HCT116 (cell line): ENCODE measurements at regions of chr10 and their contacts with region 1.

Region 1: DNA sequence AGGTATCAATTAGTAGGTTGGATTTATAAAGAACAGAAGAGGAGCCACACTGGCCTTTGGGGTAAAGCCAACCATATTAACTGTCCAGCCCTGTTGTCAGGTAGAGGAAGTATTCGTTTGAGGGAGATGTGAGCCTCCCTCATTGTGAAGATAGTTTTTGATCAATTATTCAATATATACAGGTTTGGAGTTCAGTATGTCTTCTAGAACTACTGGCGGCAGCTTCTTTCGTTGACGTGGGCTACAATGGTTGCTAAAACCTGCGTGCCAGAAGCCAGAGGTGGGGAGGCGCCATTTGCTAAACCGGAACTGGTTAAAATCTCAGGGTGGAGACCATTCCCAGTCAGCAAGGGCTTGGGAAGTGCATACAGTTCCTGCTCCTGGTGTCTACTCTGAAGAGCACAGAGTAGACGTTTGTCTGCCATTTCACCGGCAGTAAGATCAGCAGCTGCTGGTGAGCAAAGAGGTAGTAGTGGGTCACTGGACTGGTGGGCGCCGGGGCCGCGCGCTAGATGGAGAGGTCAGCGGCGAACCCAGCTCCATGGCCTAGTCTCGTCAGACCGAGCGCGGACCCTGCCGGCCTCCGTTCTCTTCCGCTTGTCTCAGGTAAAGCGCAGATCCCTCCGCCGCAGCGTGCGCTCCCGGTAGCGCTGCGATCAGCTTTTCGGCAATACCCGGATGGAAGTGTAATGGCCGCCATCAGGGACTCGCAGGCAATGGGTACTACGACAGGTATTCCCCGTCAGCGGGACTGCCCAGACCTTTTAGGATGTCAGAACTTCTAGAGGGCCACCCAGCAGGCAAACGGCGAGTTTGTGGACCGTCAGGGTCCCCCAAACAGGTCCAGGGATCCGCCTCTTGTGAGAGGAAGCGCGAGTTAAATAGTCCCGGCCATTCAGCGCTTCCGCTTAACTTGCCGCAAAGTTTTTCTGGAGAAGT is at the start of gene ZNF518A:
- DNase-seq: peak; percentile 99
- ATAC-seq: peak; percentile 86
- H3K4me3 ChIP-seq: peak within 1 kb of the TSS; percentile 59 to 71
- H3K27ac ChIP-seq: peak within 1 kb of the TSS; percentile 94
- H3K4me1 ChIP-seq: peaks cover 20 to 33% of the 10 kb centered on the region in 2 experiments; a peak in 3 of 4 replicates
- H3K27me3 ChIP-seq: no peaks in the 10 kb centered on the region
- CTCF ChIP-seq: no peak
- POLR2A ChIP-seq: peak; percentile 93
- RAD21 ChIP-seq: no peak; the same call in 1 of the 2 replicates
- total RNA-seq, gene ZNF518A: 36.7 TPM

Region 2: DNA sequence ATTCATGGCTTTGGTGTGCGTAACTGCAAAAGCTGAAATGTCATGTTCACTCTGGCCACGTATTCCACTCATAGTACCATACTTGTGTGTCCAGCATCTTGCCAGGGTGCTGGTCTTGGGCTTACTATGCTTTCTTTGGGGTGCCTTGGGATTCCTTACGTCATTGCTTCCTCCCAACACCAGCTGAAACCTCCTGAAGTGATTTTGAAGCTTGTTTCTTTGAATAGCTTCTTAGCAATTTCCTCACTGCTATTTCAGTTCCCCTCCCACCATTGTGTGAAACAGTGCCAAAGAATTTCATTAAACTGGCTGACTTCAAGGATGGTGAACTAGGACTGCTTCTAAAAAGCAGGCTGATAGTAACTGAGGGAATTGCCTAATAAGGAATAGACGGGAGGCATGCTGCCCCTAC is 336.8 kb before region 1 on chr10:
- CTCF ChIA-PET with region 1: no interaction called
- POLR2A ChIA-PET with region 1: no interaction called
- RAD21 ChIA-PET with region 1: no interaction called
- intact Hi-C with region 1: no loop called
- DNase-seq: no peak
- ATAC-seq: no peak
- H3K4me3 ChIP-seq: no peak overlapping the region
- H3K27ac ChIP-seq: no peak overlapping the region
- H3K4me1 ChIP-seq: no peaks in the 10 kb centered on the region
- H3K27me3 ChIP-seq: no peaks in the 10 kb centered on the region
- CTCF ChIP-seq: no peak
- POLR2A ChIP-seq: no peak
- RAD21 ChIP-seq: no peak

Region 3: DNA sequence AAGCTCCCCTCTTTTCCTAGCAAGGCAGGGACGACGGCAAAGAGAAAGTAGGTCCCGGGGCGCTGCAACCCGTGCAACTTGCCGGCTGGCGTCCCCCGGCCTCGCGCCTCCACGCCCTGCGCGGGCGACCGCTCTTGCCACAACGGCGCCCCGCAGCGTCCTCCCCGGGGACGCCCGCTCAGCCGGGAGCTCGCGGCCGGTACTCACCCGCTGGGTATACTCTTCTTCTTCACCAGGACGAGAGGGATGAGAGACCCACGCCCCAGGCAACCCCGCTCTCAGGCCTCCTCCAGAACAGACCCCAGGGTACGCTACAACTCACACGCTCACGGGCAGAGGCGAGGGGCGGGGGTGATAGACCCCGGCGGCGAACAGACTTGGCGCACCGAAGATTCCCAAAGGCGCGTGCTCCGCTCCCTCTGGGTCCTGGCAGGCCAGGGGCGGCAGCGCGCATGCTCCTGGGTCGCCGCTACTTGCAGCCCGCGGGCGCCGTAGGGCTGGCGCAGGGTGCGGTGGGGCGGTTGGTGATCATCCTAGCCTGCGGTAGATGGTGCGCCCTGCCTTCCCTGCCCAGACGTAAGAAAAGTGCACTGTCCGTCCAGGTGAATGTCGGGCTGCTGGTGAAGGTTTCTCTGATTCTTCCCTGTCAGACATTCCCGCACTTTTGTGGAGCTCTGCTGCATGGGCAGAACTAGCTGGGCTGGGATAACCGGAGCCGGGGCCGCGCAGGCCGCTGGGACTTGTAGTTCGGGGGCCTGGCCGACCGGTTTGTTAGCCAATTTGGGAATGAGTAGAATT is 222.0 kb before region 1 on chr10 and contains the start of gene CC2D2B:
- CTCF ChIA-PET with region 1: no interaction called
- POLR2A ChIA-PET with region 1: no interaction called
- RAD21 ChIA-PET with region 1: no interaction called
- intact Hi-C with region 1: loop called (anchors 10 kb)
- DNase-seq: peak; percentile 61
- ATAC-seq: peak; percentile 95
- H3K4me3 ChIP-seq: peak within 1 kb of the TSS; percentile 63 to 66
- H3K27ac ChIP-seq: peak within 1 kb of the TSS; percentile 68
- H3K4me1 ChIP-seq: peaks cover 0 to 19% of the 10 kb centered on the region in 2 experiments; a peak in 1 of 4 replicates
- H3K27me3 ChIP-seq: no peaks in the 10 kb centered on the region
- CTCF ChIP-seq: no peak
- POLR2A ChIP-seq: peak; percentile 80
- RAD21 ChIP-seq: no peak
- total RNA-seq, gene CC2D2B: 0.20 TPM

Region 4: DNA sequence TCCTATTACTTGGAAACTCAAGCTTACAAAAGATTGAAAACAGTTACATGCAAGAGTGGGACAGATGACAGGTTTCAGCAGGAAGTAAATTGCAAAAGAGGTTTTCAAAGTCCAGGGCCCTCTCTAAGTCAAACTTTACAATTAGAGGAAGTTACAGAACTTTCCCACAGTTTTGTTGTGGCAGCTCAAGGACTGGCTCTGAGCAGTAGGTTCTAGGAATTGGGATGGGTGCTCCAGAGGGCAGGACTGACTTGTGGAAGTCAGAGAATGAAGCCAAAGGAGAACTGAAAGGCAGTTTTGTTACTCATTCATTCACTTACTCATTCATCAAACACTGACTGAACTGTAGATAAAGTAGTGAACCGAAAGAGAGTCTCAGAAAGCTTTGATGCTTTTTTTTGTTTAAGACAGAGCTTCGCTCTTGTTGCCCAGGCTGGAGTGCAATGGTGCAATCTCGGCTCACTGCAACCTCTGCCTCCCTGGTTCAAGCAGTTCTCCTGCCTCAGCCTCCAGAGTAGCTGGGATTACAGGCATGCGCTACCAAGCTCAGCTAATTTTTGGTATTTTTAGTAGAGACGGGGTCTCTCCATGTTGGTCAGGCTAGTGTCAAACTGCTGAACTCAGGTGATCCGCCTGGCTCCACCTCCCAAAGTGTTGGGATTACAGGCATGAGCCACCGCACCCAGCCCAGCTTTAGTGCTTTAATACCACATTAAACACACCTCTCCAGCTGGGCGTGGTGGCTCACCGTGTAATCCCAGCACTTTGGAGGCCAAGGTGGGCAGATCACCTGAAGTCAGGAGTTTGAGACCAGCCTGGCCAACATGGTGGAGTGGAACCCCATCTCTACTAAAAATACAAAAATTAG is 153.1 kb before region 1 on chr10:
- CTCF ChIA-PET with region 1: no interaction called
- POLR2A ChIA-PET with region 1: no interaction called
- RAD21 ChIA-PET with region 1: no interaction called
- intact Hi-C with region 1: no loop called
- DNase-seq: no peak
- ATAC-seq: no peak
- H3K4me3 ChIP-seq: no peak overlapping the region
- H3K27ac ChIP-seq: no peak overlapping the region
- H3K4me1 ChIP-seq: no peaks in the 10 kb centered on the region
- H3K27me3 ChIP-seq: no peaks in the 10 kb centered on the region; the same call in 1 of the 2 replicates
- CTCF ChIP-seq: no peak
- POLR2A ChIP-seq: no peak
- RAD21 ChIP-seq: no peak

Region 5: DNA sequence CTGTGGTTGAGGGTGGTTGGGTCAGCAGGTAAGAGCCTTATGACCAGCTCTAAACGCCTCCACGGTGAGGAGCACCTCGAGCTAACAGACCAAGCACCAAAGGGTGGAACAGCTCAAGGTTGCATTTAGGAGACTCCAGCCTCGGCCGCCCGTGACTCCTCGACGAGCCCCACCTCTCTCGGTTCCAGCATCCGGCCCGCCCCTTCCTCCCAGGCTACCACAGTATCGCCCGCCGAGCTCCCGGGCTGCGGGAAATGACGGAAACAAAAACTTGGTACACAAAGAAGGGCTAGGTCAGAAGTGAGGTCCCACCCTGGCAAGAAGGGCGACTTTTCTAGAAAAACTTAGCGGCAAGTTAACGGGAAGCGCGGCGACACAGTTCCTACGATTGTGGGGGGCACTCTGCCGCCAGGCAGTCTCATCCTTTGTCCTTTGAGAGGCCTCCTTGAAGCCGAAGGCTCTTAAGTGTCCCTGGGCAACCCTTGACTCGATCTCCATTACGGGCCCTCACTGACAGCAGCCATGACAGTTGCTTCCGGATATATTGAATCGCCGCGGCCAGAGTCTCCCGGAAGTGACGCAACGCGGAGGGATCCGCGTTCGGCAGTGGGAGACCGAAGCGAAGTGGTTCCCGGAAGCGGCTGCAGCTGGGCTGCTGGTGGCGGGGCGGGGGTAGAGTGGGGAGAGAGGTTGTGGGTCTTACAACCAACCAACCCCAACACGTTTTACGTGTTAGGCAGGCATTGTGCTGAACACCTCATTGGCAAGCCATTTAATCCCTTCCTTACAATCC is 39.8 kb before region 1 on chr10:
- CTCF ChIA-PET with region 1: no interaction called
- POLR2A ChIA-PET with region 1: interaction called, 26 read pairs
- RAD21 ChIA-PET with region 1: no interaction called
- intact Hi-C with region 1: loop called (anchors 1 kb)
- DNase-seq: peak; percentile 85
- ATAC-seq: peak; percentile 91
- H3K4me3 ChIP-seq: peak overlapping the region; percentile 57 to 63
- H3K27ac ChIP-seq: peak overlapping the region; percentile 87
- H3K4me1 ChIP-seq: peaks cover 0 to 10% of the 10 kb centered on the region in 2 experiments; a peak in 2 of 4 replicates
- H3K27me3 ChIP-seq: no peaks in the 10 kb centered on the region
- CTCF ChIP-seq: no peak
- POLR2A ChIP-seq: peak; percentile 9
- RAD21 ChIP-seq: no peak

Region 6: GRCh38 chr10:96118604-96119450 is 10.8 kb before region 1 on chr10:
- CTCF ChIA-PET with region 1: no interaction called
- POLR2A ChIA-PET with region 1: interaction called, 37 read pairs
- RAD21 ChIA-PET with region 1: no interaction called
- intact Hi-C with region 1: loop called (anchors 1 kb)
- DNase-seq: peak; percentile 98
- ATAC-seq: peak; percentile 96
- H3K4me3 ChIP-seq: peak overlapping the region; percentile 49 to 64
- H3K27ac ChIP-seq: peak overlapping the region; percentile 73
- H3K4me1 ChIP-seq: peaks cover 27 to 38% of the 10 kb centered on the region in 2 experiments
- H3K27me3 ChIP-seq: no peaks in the 10 kb centered on the region
- CTCF ChIP-seq: no peak
- POLR2A ChIP-seq: peak; percentile 72
- RAD21 ChIP-seq: no peak

Region 7: GRCh38 chr10:96188916-96189315 is 59.3 kb after region 1 on chr10:
- CTCF ChIA-PET with region 1: no interaction called
- POLR2A ChIA-PET with region 1: no interaction called
- RAD21 ChIA-PET with region 1: no interaction called
- intact Hi-C with region 1: no loop called
- DNase-seq: no peak
- ATAC-seq: no peak
- H3K4me3 ChIP-seq: no peak overlapping the region
- H3K27ac ChIP-seq: no peak overlapping the region
- H3K4me1 ChIP-seq: no peaks in the 10 kb centered on the region
- H3K27me3 ChIP-seq: no peaks in the 10 kb centered on the region
- CTCF ChIP-seq: no peak
- POLR2A ChIP-seq: no peak
- RAD21 ChIP-seq: no peak